ENCODE measurements at regions of chr12 and their contacts with region 1.

Region 1: GRCh38 chr12:115916910-115917668 is 360.4 kb downstream of the MED13L start:
- DNase-seq: no peak
- H3K4me3 ChIP-seq: peak overlapping the region; percentile 31 to 55 (median 38)
- H3K27ac ChIP-seq: no peak overlapping the region
- H3K4me1 ChIP-seq: peaks cover 0 to 7% (median 0%) of the 10 kb centered on the region in 3 donors
- H3K27me3 ChIP-seq: peaks cover 0 to 48% (median 0%) of the 10 kb centered on the region in 4 donors
- CTCF ChIP-seq: peak; percentile 88 to 98 (median 96)
- POLR2A ChIP-seq: no peak

Region 2: GRCh38 chr12:114662512-114663177 is 1254.4 kb before region 1 on chr12:
- intact Hi-C with region 1: loop called (anchors 5 kb)
- DNase-seq: no peak
- H3K4me3 ChIP-seq: no peak overlapping the region
- H3K27ac ChIP-seq: no peak overlapping the region
- H3K4me1 ChIP-seq: peaks cover 0 to 33% (median 0%) of the 10 kb centered on the region in 3 donors
- H3K27me3 ChIP-seq: peaks cover 5 to 55% (median 24%) of the 10 kb centered on the region in 4 donors
- CTCF ChIP-seq: peak; percentile 63 to 96 (median 94)
- POLR2A ChIP-seq: no peak

Region 3: DNA sequence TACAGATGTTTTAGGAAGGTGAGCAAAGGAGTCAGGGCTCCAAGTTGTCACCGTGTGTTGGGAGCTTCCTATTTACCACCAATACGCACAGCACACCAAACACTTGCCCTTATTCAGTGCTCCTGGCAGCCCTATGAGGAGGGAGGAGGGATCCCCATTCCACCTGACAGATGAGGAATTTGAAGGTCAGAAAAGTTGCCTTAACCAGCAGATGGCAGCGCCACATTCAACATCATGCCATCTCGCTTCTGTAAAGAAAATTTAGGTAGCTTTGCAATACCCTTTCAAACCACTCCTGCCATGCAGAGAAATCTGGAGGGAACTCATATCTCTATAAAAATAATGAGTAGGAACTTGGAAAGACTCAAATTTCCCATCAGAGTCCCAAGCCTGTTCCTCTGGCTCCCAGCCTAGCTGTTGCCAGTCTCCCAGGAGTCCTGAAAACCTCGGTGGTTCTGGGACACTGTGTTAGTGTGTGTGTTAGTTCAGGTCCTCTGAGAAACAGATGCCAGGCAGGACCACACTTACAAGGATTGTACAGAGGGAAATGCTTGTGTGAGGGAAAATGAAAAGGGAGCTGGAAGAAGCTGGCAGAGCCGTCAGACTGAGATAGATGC is 50.1 kb before region 1 on chr12:
- intact Hi-C with region 1: loop called (anchors 5 kb)
- DNase-seq: no peak
- H3K4me3 ChIP-seq: no peak overlapping the region
- H3K27ac ChIP-seq: no peak overlapping the region
- H3K4me1 ChIP-seq: peaks cover 1 to 23% (median 7%) of the 10 kb centered on the region in 3 donors
- H3K27me3 ChIP-seq: peaks cover 0 to 6% (median 0%) of the 10 kb centered on the region in 4 donors
- CTCF ChIP-seq: peak in 4 of 6 experiments; percentile 11 to 58 (median 42)
- POLR2A ChIP-seq: no peak

Region 4: GRCh38 chr12:116236148-116236731 is 319.2 kb after region 1 on chr12:
- intact Hi-C with region 1: no loop called
- DNase-seq: no peak
- H3K4me3 ChIP-seq: no peak overlapping the region
- H3K27ac ChIP-seq: no peak overlapping the region
- H3K4me1 ChIP-seq: peaks cover 0 to 62% (median 19%) of the 10 kb centered on the region in 3 donors
- H3K27me3 ChIP-seq: no peaks in the 10 kb centered on the region
- CTCF ChIP-seq: peak; percentile 59 to 80 (median 76)
- POLR2A ChIP-seq: no peak

Measured in esophagus squamous epithelium (tissue), 5 donors.